Testis (tissue), 5 donors: ENCODE measurements at regions of chr17 and their contacts with region 1.

Region 1: GRCh38 chr17:41966463-41967140 is at the start of gene CNP:
- DNase-seq: peak; percentile 94
- H3K4me3 ChIP-seq: peak within 1 kb of the TSS; percentile 95 to 96
- H3K27ac ChIP-seq: peak within 1 kb of the TSS; percentile 90 to 92
- H3K4me1 ChIP-seq: peaks cover 22% of the 10 kb centered on the region
- H3K27me3 ChIP-seq: no peaks in the 10 kb centered on the region
- CTCF ChIP-seq: no peak
- POLR2A ChIP-seq: no peak
- total RNA-seq, gene CNP: 74.3 to 89.7 TPM

Region 2: DNA sequence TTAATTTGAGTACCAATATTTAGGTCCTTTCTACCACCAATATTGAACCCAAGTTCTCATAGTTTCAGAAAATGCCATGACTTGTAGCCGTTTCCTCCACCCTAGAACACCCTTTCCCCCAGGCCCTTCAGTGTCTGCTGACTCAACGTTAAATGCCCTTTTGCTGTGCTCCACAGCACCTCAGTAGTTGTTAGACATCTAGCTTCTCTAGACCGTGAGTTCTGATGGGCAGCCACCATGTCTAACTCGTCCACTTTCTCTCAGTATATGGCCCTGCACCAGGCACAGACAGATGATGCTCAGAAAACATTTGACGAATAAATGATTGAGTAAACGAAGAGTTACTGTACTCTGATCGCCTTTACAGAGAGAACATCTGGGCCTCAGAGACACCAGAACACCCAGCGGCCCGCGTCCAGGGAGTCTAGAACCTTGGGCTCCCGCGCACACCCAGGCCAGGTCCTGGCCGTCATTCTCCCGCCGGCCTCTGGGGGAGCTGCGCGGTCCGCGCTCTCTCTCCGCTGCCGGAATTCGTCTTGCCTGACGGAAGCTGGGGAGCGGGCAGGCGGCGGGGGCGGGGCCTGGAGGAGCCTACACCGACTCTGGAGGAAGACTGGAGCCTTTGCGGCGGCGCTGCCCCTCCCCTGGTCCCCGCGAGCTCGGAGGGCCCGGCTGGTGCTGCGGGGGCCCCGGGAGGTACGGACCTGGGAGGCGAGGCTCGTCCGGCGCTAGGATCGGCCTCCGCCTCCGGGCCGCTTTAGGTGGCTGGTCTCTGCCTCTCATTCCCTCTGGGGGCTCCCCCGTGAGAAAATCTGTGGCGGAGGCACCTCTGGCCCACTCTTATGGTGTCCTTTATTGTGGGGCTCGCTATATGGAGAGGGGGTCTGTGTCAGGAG is 53.2 kb after region 1 on chr17 and contains the start of gene NKIRAS2:
- intact Hi-C with region 1: loop called (anchors 10 kb)
- DNase-seq: peak; percentile 96
- H3K4me3 ChIP-seq: peak within 1 kb of the TSS; percentile 78 to 86
- H3K27ac ChIP-seq: peak within 1 kb of the TSS; percentile 60 to 70
- H3K4me1 ChIP-seq: peaks cover 20% of the 10 kb centered on the region
- H3K27me3 ChIP-seq: no peaks in the 10 kb centered on the region
- CTCF ChIP-seq: peak; percentile 95 to 98 (median 96)
- POLR2A ChIP-seq: no peak
- total RNA-seq, gene NKIRAS2: 85.1 to 103 TPM

Region 3: DNA sequence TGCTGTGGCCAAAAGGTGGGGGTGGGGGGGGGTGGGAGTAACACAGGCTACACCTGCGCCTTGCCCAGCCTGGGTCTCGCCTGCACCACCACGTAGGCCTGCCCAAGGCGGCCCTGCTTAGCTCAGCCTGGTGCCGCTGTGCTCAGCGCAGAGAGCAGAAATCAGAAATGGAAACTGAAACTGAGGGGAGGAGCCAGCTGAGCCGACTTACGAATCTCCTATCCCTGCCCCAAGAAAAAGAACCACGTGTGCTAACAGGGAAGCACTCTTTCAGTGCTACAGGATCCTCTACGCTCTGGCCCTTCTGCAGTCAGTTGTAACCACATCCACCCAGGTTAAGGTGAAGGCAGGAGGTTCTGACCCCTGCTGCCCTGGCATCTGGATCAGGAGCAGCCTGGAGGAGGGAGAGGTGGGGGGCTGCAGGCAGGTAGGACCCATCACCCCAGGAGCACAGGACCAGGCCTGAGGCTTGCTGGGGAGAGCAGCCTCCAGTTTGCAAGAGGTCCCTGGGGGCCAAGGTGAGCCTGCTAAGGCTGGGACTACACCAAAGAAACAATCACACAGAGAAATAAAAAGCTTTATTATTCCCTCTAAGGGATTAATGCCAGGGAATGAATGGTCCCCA is 146.1 kb after region 1 on chr17 and contains the start of gene DHX58:
- intact Hi-C with region 1: loop called (anchors 5 kb)
- DNase-seq: peak; percentile 90
- H3K4me3 ChIP-seq: peak within 1 kb of the TSS; percentile 42 to 68
- H3K27ac ChIP-seq: peak within 1 kb of the TSS; percentile 92 to 93
- H3K4me1 ChIP-seq: peaks cover 31% of the 10 kb centered on the region
- H3K27me3 ChIP-seq: no peaks in the 10 kb centered on the region
- CTCF ChIP-seq: no peak
- POLR2A ChIP-seq: no peak
- total RNA-seq, gene DHX58: 35.9 to 51.1 TPM